ENCODE measurements at regions of chr7 and their contacts with region 1.

Region 1: DNA sequence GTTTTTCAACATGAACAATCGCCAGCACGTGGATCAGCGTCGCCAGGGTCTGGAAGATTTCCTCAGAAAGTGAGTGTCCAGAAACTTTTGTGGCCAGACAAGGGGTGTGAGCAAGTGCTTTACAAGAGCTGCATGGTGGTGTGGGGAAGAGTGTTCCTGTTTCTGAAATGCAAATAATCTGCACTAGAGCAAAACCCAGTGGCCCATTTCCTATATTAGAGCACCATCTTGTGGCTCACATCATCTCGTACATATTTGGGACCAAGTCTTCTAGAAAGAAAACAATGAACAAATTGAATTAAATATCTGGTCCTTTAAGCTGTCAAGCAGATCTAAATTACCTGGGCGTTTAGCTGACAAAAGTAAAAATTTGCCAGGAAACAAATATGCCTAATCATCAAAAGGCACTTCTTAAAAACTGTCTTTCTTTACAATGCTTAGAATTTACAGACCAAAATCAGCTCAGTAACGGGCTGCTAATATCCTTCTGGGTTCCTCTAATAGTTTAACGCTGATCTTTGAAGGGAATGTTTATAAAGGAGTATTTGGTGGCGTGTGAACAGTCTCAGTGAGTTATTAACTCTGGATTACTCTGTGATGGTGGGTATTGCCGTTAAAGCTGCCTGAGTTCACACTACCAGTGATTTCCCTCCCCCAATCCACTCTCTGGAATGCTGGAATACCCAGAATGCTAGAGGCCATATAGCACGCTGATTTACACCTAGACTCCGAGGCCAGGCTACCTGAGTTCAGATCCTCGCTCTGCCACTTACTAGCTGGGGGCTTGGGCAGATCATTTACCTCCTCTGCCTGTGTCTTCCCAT is 73.6 kb downstream of the SNX10 start:
- DNase-seq: peak in 7 of 9 donors; percentile 51 to 77 (median 69)
- ATAC-seq: peak; percentile 88
- H3K4me3 ChIP-seq: no peak overlapping the region
- H3K4me3 Mint-ChIP-seq: no peak overlapping the region
- H3K27ac ChIP-seq: no peak overlapping the region
- H3K27ac Mint-ChIP-seq: peak overlapping the region in 1 of 9 donors; percentile 28
- H3K4me1 ChIP-seq: peaks cover 0 to 8% of the 10 kb centered on the region in 2 donors
- H3K4me1 Mint-ChIP-seq: peaks cover 3 to 16% (median 8%) of the 10 kb centered on the region in 7 donors
- H3K27me3 ChIP-seq: no peaks in the 10 kb centered on the region
- H3K27me3 Mint-ChIP-seq: peaks cover 0 to 4% (median 0%) of the 10 kb centered on the region in 5 donors

Region 2: DNA sequence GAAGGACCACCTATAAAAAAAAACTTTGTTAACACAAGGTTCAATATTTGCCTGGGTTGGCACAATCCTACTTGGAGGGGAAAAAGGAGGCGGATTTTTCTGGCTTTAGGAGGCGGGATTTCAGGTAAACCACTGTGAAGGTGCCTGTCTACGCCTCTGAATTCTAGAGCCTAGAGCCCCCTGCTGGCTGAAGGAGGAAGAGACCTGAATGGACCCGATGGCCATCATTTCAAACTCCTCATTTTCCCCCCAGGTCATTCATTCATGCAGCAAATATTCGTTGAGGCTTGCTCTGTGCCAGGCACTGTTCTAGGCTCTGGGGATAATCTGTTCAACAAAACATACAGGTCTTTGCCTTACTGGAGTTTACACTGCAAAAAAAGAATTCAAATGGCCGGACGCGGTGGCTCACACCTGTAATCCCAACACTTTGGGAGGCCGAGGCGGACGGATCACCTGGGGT is 303.6 kb before region 1 on chr7:
- CTCF ChIA-PET with region 1: interaction called, 3 read pairs
- POLR2A ChIA-PET with region 1: no interaction called
- intact Hi-C with region 1: loop called in 1 of 2 experiments (anchors 1 kb)
- DNase-seq: peak; percentile 37 to 71 (median 59)
- ATAC-seq: peak; percentile 88
- H3K4me3 ChIP-seq: no peak overlapping the region
- H3K4me3 Mint-ChIP-seq: no peak overlapping the region
- H3K27ac ChIP-seq: no peak overlapping the region
- H3K27ac Mint-ChIP-seq: no peak overlapping the region
- H3K4me1 ChIP-seq: no peaks in the 10 kb centered on the region
- H3K4me1 Mint-ChIP-seq: peaks cover 0 to 13% (median 0%) of the 10 kb centered on the region in 7 donors
- H3K27me3 ChIP-seq: no peaks in the 10 kb centered on the region
- H3K27me3 Mint-ChIP-seq: peaks cover 5 to 33% (median 15%) of the 10 kb centered on the region in 5 donors

Region 3: DNA sequence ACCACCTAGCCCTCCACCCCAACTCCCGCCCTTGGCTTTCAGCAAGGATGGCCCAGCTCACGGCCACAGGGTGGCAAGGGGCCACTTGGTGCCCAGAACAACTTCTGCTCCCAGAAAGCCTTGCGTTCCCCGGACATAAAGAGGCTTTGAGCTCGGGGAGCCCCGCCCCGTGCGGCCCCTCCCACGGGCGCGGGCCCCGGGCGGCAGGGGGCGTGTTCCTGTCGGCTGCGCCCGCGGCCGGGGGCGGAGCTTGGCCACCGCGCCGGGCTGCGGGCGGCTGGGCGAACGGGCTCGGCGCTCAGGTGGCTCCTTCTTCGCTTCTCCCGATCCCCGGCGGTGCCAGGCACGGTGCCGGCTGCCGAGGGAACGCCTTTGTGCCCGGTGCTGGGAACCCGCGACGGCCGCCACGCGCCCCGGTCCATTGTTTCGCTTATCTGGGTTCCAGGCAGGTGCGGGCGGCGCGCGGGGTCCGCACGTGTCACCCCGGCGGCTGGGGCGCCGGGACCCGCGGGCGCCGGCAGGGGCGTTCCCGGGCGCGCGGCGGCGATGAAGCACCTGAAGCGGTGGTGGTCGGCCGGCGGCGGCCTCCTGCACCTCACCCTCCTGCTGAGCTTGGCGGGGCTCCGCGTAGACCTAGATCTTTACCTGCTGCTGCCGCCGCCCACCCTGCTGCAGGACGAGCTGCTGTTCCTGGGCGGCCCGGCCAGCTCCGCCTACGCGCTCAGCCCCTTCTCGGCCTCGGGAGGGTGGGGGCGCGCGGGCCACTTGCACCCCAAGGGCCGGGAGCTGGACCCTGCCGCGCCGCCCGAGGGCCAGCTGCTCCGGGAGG is 213.1 kb before region 1 on chr7 and contains the start of gene NFE2L3:
- CTCF ChIA-PET with region 1: no interaction called
- POLR2A ChIA-PET with region 1: no interaction called
- intact Hi-C with region 1: loop called in 1 of 2 experiments (anchors 5 kb)
- DNase-seq: peak; percentile 71 to 90 (median 79)
- ATAC-seq: peak; percentile 90
- H3K4me3 ChIP-seq: peak within 1 kb of the TSS; percentile 77
- H3K4me3 Mint-ChIP-seq: peak within 1 kb of the TSS; percentile 85 to 100 (median 92)
- H3K27ac ChIP-seq: peak within 1 kb of the TSS; percentile 73
- H3K27ac Mint-ChIP-seq: peak within 1 kb of the TSS; percentile 74 to 97 (median 93)
- H3K4me1 ChIP-seq: peaks cover 26 to 33% of the 10 kb centered on the region in 2 donors
- H3K4me1 Mint-ChIP-seq: peaks cover 23 to 56% (median 51%) of the 10 kb centered on the region in 7 donors
- H3K27me3 ChIP-seq: no peaks in the 10 kb centered on the region
- H3K27me3 Mint-ChIP-seq: no peaks in the 10 kb centered on the region
- total RNA-seq, gene NFE2L3: 1.1 to 49.5 (median 4.5) TPM

Region 4: GRCh38 chr7:26376175-26376917 is 11.1 kb after region 1 on chr7:
- CTCF ChIA-PET with region 1: interaction called, 11 read pairs
- POLR2A ChIA-PET with region 1: no interaction called
- intact Hi-C with region 1: no loop called
- DNase-seq: peak in 7 of 9 donors; percentile 13 to 56 (median 20)
- ATAC-seq: peak; percentile 51
- H3K4me3 ChIP-seq: peak overlapping the region; percentile 54
- H3K4me3 Mint-ChIP-seq: peak overlapping the region; percentile 83 to 95 (median 85)
- H3K27ac ChIP-seq: no peak overlapping the region
- H3K27ac Mint-ChIP-seq: peak overlapping the region in 1 of 9 donors; percentile 65
- H3K4me1 ChIP-seq: peaks cover 4 to 6% of the 10 kb centered on the region in 2 donors
- H3K4me1 Mint-ChIP-seq: peaks cover 0 to 8% (median 4%) of the 10 kb centered on the region in 7 donors
- H3K27me3 ChIP-seq: peaks cover 4 to 24% of the 10 kb centered on the region in 2 donors
- H3K27me3 Mint-ChIP-seq: peaks cover 28 to 62% (median 37%) of the 10 kb centered on the region in 5 donors

Region 5: GRCh38 chr7:26667500-26668133 is 302.3 kb after region 1 on chr7:
- CTCF ChIA-PET with region 1: interaction called, 21 read pairs
- POLR2A ChIA-PET with region 1: interaction called, 3 read pairs
- intact Hi-C with region 1: loop called (anchors 1 kb)
- DNase-seq: peak in 8 of 9 donors; percentile 39 to 78 (median 64)
- ATAC-seq: peak; percentile 77
- H3K4me3 ChIP-seq: no peak overlapping the region
- H3K4me3 Mint-ChIP-seq: no peak overlapping the region
- H3K27ac ChIP-seq: no peak overlapping the region
- H3K27ac Mint-ChIP-seq: no peak overlapping the region
- H3K4me1 ChIP-seq: peaks cover 0 to 4% of the 10 kb centered on the region in 2 donors
- H3K4me1 Mint-ChIP-seq: peaks cover 0 to 23% (median 17%) of the 10 kb centered on the region in 7 donors
- H3K27me3 ChIP-seq: no peaks in the 10 kb centered on the region
- H3K27me3 Mint-ChIP-seq: peaks cover 9 to 61% (median 14%) of the 10 kb centered on the region in 5 donors

Measured in naive thymus-derived CD4-positive, alpha-beta T cell (primary cell).